Head of caudate nucleus (tissue), 42 donors: ENCODE measurements at regions of chr2 and their contacts with region 1.

Region 1: GRCh38 chr2:241877989-241878970 is 8.8 kb downstream of the RTP5 start:
- DNase-seq: peak; percentile 35 to 88 (median 80)

Region 2: DNA sequence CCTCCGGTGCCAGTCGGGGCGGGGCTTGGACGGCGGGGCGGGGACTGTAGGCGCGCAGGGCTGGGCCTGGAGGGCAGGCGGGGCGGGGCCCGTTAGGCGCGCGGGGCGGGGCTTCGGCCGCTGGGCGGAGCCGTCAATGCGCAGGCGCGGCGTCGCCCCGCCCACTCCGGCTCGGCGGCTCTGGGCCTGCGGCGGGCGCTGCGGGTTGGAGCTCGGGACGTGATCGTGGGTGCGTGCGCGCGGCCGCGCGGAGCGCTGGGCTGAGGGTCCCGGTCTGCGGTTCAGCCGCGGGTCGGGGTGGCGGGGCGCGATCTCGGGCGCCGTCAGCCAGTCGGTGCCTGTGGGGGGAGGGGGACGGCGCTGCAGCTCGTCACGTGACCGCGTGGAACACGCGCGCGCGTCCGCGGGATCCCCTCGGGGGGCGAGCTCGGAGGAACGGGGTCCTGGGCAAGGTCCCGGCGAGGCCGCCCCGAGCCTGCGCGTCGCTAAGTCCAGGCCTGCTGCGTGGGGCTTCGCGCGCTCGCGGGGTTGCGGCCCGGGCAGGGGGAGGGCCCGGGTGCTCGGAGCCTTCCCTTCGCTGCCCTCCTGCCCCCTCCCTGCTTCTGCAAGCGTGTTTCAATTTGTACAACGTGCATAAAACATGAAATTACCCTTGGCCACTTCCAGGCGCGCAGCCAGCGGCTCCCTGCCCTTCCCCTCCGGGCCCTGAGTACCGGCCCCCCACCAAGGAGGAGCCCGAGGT is 143.6 kb before region 1 on chr2 and contains the start of gene D2HGDH:
- intact Hi-C with region 1: loop called (anchors 5 kb)
- DNase-seq: peak; percentile 85 to 98 (median 95)

Region 3: GRCh38 chr2:242060212-242060835 is 182.0 kb after region 1 on chr2:
- intact Hi-C with region 1: no loop called
- DNase-seq: peak in 2 of 42 donors; percentile 14 to 36